ENCODE measurements at regions of chr2 and their contacts with region 1.

Region 1: DNA sequence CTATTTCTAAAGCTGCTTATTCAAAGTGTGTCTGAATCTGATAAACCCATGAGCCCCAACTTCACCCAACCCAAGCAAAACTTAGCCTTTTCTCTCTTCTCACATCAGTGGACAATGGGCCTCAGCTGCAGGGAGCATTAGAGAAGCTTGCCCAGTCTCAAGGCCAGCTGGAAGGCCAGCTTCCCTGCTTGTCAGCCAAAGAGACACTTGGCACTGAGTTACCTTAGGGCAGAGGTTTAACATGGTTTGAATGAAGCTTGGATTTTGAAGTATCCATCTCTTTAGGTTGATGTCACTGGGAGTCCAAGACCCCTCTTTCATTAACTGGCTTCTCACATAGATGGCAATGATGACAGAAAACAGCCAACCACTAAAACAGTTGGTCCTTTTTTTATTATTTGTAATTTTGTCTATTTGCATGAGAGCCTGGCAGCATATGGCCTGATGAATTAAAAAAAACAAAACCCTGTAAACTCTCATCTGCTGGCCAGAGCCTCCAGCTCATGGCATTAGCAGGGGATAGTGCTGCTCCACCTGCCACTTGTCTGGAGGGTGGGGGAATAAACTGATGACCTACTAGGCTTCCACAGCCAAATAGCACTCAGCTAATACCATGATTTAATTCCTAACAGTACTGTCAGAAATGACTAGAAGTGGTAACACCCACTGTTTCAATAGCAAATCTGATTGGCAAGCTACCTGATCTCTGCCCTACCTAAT is 137.0 kb downstream of the UBE2E3 start:
- DNase-seq: no peak
- ATAC-seq: no peak
- H3K4me3 ChIP-seq: no peak overlapping the region
- H3K27ac ChIP-seq: no peak overlapping the region
- H3K4me1 ChIP-seq: no peaks in the 10 kb centered on the region
- H3K27me3 ChIP-seq: no peaks in the 10 kb centered on the region
- CTCF ChIP-seq: no peak
- EP300 ChIP-seq: no peak
- POLR2A ChIP-seq: no peak
- RAD21 ChIP-seq: no peak

Region 2: GRCh38 chr2:181312515-181312927 is 195.2 kb after region 1 on chr2:
- CTCF ChIA-PET with region 1: no interaction called
- POLR2A ChIA-PET with region 1: no interaction called
- in situ Hi-C with region 1: no loop called
- intact Hi-C with region 1: no loop called
- DNase-seq: no peak
- ATAC-seq: no peak
- H3K4me3 ChIP-seq: no peak overlapping the region
- H3K27ac ChIP-seq: no peak overlapping the region
- H3K4me1 ChIP-seq: no peaks in the 10 kb centered on the region
- H3K27me3 ChIP-seq: no peaks in the 10 kb centered on the region
- CTCF ChIP-seq: no peak
- EP300 ChIP-seq: no peak
- POLR2A ChIP-seq: no peak
- RAD21 ChIP-seq: no peak

Region 3: GRCh38 chr2:181444654-181445053 is 327.3 kb after region 1 on chr2:
- CTCF ChIA-PET with region 1: no interaction called
- POLR2A ChIA-PET with region 1: no interaction called
- in situ Hi-C with region 1: no loop called
- intact Hi-C with region 1: loop called (anchors 1 kb)
- DNase-seq: no peak
- ATAC-seq: no peak
- H3K4me3 ChIP-seq: no peak overlapping the region
- H3K27ac ChIP-seq: no peak overlapping the region
- H3K4me1 ChIP-seq: no peaks in the 10 kb centered on the region
- H3K27me3 ChIP-seq: no peaks in the 10 kb centered on the region
- CTCF ChIP-seq: no peak
- EP300 ChIP-seq: no peak
- POLR2A ChIP-seq: no peak
- RAD21 ChIP-seq: no peak

Measured in HepG2 (cell line).